PC-9 (cell line): ENCODE measurements at regions of chrX and their contacts with region 1.

Region 1: GRCh38 chrX:10062352-10062751 is 94.4 kb upstream of the CLCN4 start:
- DNase-seq: peak; percentile 33 to 87
- H3K4me3 ChIP-seq: peak overlapping the region; percentile 59; the same call in 1 of the 2 replicates
- H3K27ac ChIP-seq: peak overlapping the region; percentile 99
- H3K4me1 ChIP-seq: peaks cover 38% of the 10 kb centered on the region
- H3K27me3 ChIP-seq: no peaks in the 10 kb centered on the region
- CTCF ChIP-seq: no peak

Region 2: DNA sequence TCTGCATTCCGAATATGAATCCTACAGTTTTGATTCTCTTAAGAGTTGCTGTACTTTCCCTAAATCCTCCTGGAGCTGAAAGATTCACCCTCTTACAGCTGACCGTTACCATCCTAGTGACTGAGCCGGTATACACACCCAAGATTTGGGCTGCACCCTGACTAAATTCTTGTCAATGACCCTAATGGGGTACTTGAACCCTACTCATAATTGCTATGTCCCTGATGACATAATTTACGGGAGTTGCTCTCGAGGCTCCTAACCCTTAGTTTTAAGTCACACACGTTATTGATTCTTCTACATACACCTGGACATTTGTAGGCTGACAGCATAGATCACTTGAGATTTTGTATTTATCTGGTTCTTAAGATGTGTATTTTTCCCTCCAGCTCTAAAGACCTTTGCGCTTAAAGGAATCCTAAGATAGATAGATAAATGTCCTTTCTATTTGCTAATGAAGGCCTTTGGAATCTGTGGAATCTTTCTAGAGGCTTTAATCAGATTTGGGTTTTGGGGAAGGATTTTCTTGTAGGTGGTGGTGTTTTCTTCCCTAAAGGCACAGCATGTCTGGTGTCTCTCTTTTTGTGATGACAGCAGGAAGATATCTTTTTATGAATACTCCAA is 57.4 kb before region 1 on chrX:
- CTCF ChIA-PET with region 1: no interaction called
- POLR2A ChIA-PET with region 1: no interaction called
- intact Hi-C with region 1: loop called (anchors 2 kb)
- DNase-seq: no peak
- H3K4me3 ChIP-seq: no peak overlapping the region
- H3K27ac ChIP-seq: peak overlapping the region; percentile 90
- H3K4me1 ChIP-seq: peaks cover 37% of the 10 kb centered on the region
- H3K27me3 ChIP-seq: no peaks in the 10 kb centered on the region
- CTCF ChIP-seq: no peak

Region 3: GRCh38 chrX:10014462-10015356 is 47.6 kb before region 1 on chrX:
- CTCF ChIA-PET with region 1: no interaction called
- POLR2A ChIA-PET with region 1: no interaction called
- intact Hi-C with region 1: loop called (anchors 2 kb)
- DNase-seq: peak; percentile 63 to 92
- H3K4me3 ChIP-seq: peak overlapping the region; percentile 69
- H3K27ac ChIP-seq: peak overlapping the region; percentile 72
- H3K4me1 ChIP-seq: peaks cover 46% of the 10 kb centered on the region
- H3K27me3 ChIP-seq: no peaks in the 10 kb centered on the region
- CTCF ChIP-seq: no peak

Region 4: GRCh38 chrX:10030570-10030969 is 31.8 kb before region 1 on chrX:
- CTCF ChIA-PET with region 1: no interaction called
- POLR2A ChIA-PET with region 1: no interaction called
- intact Hi-C with region 1: no loop called
- DNase-seq: no peak
- H3K4me3 ChIP-seq: no peak overlapping the region
- H3K27ac ChIP-seq: no peak overlapping the region
- H3K4me1 ChIP-seq: peaks cover 9% of the 10 kb centered on the region; the same call in 1 of the 2 replicates
- H3K27me3 ChIP-seq: no peaks in the 10 kb centered on the region
- CTCF ChIP-seq: no peak

Region 5: GRCh38 chrX:10119399-10119990 is 57.1 kb after region 1 on chrX:
- CTCF ChIA-PET with region 1: no interaction called
- POLR2A ChIA-PET with region 1: no interaction called
- intact Hi-C with region 1: no loop called
- DNase-seq: peak; percentile 45 to 46
- H3K4me3 ChIP-seq: no peak overlapping the region
- H3K27ac ChIP-seq: no peak overlapping the region
- H3K4me1 ChIP-seq: no peaks in the 10 kb centered on the region
- H3K27me3 ChIP-seq: no peaks in the 10 kb centered on the region
- CTCF ChIP-seq: peak; percentile 100

Region 6: DNA sequence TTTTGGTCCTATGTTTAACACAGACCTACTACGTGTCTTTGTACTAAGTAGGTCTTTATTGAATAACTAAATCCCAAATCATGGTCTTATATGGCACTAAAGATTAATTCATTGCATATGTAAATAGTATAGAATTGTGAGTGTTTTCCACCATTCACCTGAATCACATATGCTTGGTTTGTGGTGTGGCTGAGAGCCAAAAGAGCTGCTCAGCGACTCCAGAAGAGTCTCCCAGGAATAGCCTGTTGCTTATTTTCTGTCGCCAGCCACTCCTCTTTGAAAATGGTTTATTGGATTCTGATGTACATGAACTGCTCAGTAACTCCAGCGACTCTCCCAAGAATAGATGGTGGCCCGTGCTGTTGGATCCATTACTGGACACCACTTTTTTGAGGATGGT is 279.0 kb after region 1 on chrX:
- CTCF ChIA-PET with region 1: no interaction called
- POLR2A ChIA-PET with region 1: no interaction called
- intact Hi-C with region 1: no loop called
- DNase-seq: no peak
- H3K4me3 ChIP-seq: no peak overlapping the region
- H3K27ac ChIP-seq: no peak overlapping the region
- H3K4me1 ChIP-seq: no peaks in the 10 kb centered on the region
- H3K27me3 ChIP-seq: no peaks in the 10 kb centered on the region
- CTCF ChIP-seq: no peak